Heart right ventricle (tissue), 16 donors: ENCODE measurements at regions of chr10 and their contacts with region 1.

Region 1: DNA sequence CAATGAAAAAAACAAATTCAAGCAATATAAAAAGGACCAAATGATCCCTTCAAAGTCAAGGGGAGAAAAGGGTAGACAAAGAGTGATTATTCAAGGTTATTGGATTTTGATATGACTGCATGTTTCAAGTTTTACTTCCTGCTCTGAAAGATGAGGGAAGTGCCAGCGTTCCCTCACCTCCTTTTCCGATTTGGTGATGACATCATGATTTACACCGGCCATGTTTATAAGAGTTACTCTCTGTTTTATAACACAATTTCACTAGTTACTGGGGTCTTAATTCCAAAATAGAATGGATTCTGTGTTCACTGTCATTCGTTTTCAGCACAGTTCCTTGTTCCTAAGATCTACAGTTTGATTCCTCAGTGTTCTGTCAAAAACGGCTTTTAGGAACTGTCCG is 60.5 kb upstream of the CPXM2 start:
- DNase-seq: no peak
- ATAC-seq: no peak
- H3K4me3 ChIP-seq: no peak overlapping the region
- H3K27ac ChIP-seq: no peak overlapping the region
- H3K4me1 ChIP-seq: no peaks in the 10 kb centered on the region
- H3K27me3 ChIP-seq: peaks cover 0 to 17% (median 5%) of the 10 kb centered on the region in 7 donors
- CTCF ChIP-seq: no peak

Region 2: GRCh38 chr10:123821136-123821535 is 131.0 kb before region 1 on chr10:
- intact Hi-C with region 1: loop called in 1 of 10 experiments (anchors 5 kb)
- DNase-seq: no peak
- ATAC-seq: no peak
- H3K4me3 ChIP-seq: no peak overlapping the region
- H3K27ac ChIP-seq: no peak overlapping the region
- H3K4me1 ChIP-seq: no peaks in the 10 kb centered on the region
- H3K27me3 ChIP-seq: no peaks in the 10 kb centered on the region
- CTCF ChIP-seq: no peak